ENCODE measurements at regions of chr3 and their contacts with region 1.

Region 1: GRCh38 chr3:30199096-30199759 is 407.2 kb upstream of the TGFBR2 start:
- DNase-seq: peak; percentile 24 to 79
- ATAC-seq: peak in 2 of 3 donors; percentile 49 to 62
- H3K4me3 ChIP-seq: no peak overlapping the region
- H3K4me3 Mint-ChIP-seq: no peak overlapping the region
- H3K27ac ChIP-seq: no peak overlapping the region
- H3K27ac Mint-ChIP-seq: no peak overlapping the region
- H3K4me1 ChIP-seq: no peaks in the 10 kb centered on the region
- H3K4me1 Mint-ChIP-seq: no peaks in the 10 kb centered on the region
- H3K27me3 ChIP-seq: no peaks in the 10 kb centered on the region
- H3K27me3 Mint-ChIP-seq: peaks cover 0 to 8% of the 10 kb centered on the region in 2 donors
- CTCF ChIP-seq: peak; percentile 91

Region 2: DNA sequence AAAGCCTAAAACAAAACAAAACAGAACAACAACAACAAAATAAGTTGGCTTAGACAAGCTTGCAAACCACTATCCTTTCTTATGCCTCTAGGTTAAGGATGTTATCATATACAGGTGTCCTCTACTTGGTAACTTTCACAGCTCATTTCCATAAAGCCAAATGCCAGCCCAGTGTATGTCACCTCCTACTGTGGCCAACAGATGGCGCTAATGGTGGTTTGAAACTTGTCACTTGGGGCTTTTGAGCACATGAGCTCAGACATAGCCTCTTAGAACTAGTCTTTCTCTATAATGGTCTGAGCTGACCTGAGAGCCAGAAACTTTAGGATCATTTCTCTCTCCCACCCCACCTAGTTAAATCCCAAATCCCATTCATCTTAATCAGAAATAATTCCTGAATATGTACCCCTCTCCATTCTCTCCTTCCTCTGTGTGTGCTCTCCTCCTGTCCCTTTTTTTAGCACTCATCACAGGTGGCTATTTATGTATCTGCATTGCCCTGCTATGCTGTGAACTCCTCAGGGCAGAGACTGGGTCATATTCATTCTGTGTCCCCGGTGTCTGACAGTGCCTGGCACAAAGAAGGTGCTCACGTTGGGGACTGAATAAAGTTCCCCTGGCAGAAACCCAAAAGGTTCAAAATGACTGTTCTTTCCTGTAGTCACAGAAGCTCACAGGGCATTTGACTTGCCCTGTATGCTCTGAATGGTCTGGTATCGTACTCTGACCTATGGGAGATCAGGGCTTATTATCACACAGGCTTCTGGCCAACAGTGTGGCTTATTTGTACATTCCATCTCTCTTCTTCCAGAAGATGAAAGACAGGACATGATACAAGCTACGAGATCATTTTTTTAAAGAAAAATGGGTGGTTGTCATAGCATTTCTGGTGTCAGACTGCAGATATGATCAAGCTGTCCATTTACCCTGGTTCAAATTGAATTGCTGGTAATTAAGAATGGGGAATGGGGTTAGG is 1531.3 kb before region 1 on chr3:
- intact Hi-C with region 1: loop called (anchors 10 kb)
- DNase-seq: peak; percentile 16 to 60
- ATAC-seq: peak in 2 of 3 donors; percentile 63 to 69
- H3K4me3 ChIP-seq: no peak overlapping the region
- H3K4me3 Mint-ChIP-seq: no peak overlapping the region
- H3K27ac ChIP-seq: no peak overlapping the region
- H3K27ac Mint-ChIP-seq: no peak overlapping the region
- H3K4me1 ChIP-seq: no peaks in the 10 kb centered on the region
- H3K4me1 Mint-ChIP-seq: no peaks in the 10 kb centered on the region
- H3K27me3 ChIP-seq: no peaks in the 10 kb centered on the region
- H3K27me3 Mint-ChIP-seq: peaks cover 0 to 4% of the 10 kb centered on the region in 2 donors
- CTCF ChIP-seq: peak; percentile 29

Region 3: DNA sequence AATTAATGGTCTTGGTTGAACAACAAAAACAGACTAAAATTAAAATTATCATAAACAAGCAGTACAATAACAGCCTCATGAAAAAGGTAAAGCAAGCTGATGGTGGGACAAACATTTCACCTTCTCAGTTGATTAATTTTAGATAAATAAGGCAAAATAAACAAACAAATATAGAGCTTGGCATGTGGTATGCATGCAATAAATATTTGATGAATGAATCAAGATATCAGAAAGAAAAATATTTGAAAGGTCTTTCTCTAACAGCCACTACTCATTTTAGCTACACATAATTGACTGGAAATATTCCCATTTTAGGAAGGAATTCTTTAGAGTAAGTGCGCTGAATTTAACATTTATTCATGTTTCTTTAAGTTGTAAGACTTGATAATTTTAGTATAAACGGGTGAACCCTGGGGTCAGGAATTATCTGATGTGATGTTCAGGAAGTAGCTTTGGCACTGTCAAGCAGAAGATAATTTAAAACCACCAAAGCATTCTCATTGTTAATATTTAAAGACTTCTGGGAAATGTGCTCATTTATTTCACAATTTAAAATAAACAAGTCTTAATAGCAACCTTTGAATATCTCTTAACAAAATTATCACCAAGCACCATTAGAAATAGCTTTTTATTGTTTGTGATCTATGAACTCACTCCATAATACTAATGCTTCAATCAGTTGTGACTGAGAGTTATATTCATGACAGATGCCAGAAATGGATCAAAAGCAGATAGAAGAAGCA is 34.9 kb after region 1 on chr3:
- intact Hi-C with region 1: no loop called
- DNase-seq: no peak
- ATAC-seq: no peak
- H3K4me3 ChIP-seq: no peak overlapping the region
- H3K4me3 Mint-ChIP-seq: no peak overlapping the region
- H3K27ac ChIP-seq: no peak overlapping the region
- H3K27ac Mint-ChIP-seq: no peak overlapping the region
- H3K4me1 ChIP-seq: no peaks in the 10 kb centered on the region
- H3K4me1 Mint-ChIP-seq: no peaks in the 10 kb centered on the region
- H3K27me3 ChIP-seq: no peaks in the 10 kb centered on the region
- H3K27me3 Mint-ChIP-seq: peaks cover 3 to 13% of the 10 kb centered on the region in 2 donors
- CTCF ChIP-seq: no peak